ENCODE measurements at regions of chr15 and their contacts with region 1.

Region 1: GRCh38 chr15:93001881-93002280 is 87.1 kb downstream of the RGMA start:
- DNase-seq: no peak
- ATAC-seq: no peak
- H3K4me3 ChIP-seq: no peak overlapping the region
- H3K27ac ChIP-seq: no peak overlapping the region
- H3K4me1 ChIP-seq: no peaks in the 10 kb centered on the region
- H3K27me3 ChIP-seq: no peaks in the 10 kb centered on the region
- CTCF ChIP-seq: no peak

Region 2: DNA sequence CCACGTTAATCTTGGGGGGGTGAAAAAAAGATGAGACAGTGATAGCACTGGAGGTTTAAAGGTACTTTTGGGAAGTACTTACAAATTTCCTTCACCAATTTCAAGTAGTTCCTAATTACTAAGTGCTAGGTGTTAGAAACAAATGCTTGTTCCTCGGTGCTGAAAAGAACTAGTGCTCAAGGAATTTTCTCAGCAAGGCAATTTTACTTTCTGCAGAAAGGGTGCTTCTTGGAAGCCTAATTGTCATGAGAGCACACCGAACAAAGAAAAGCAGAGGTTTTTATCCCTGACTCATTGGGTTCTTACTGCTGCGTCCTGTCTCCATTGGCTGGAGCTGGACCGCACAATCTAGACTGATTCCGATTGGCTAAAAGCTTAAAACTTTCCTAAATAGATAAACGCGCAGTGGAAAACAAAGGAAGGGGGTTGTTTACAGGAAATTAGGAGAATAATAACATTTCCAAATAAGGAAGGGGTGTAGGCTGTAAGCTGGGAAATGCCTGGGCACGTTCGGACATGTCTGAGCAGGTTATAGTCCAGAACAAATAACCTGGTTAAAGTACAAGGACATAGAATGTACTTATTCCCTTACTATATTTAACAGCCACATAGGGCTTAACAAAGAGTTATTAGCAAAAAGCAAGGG is 52.2 kb before region 1 on chr15:
- intact Hi-C with region 1: loop called in 1 of 2 experiments (anchors 10 kb)
- DNase-seq: no peak
- ATAC-seq: no peak
- H3K4me3 ChIP-seq: no peak overlapping the region
- H3K27ac ChIP-seq: no peak overlapping the region
- H3K4me1 ChIP-seq: no peaks in the 10 kb centered on the region
- H3K27me3 ChIP-seq: no peaks in the 10 kb centered on the region
- CTCF ChIP-seq: no peak

Region 3: GRCh38 chr15:93087825-93088199 is 85.9 kb after region 1 on chr15:
- intact Hi-C with region 1: no loop called
- DNase-seq: peak in 3 of 4 donors; percentile 65 to 82 (median 67)
- ATAC-seq: peak; percentile 93
- H3K4me3 ChIP-seq: peak overlapping the region; percentile 28 to 49
- H3K27ac ChIP-seq: no peak overlapping the region
- H3K4me1 ChIP-seq: peaks cover 9 to 25% of the 10 kb centered on the region in 2 donors
- H3K27me3 ChIP-seq: peaks cover 24 to 95% of the 10 kb centered on the region in 2 donors
- CTCF ChIP-seq: peak; percentile 84 to 88

Region 4: DNA sequence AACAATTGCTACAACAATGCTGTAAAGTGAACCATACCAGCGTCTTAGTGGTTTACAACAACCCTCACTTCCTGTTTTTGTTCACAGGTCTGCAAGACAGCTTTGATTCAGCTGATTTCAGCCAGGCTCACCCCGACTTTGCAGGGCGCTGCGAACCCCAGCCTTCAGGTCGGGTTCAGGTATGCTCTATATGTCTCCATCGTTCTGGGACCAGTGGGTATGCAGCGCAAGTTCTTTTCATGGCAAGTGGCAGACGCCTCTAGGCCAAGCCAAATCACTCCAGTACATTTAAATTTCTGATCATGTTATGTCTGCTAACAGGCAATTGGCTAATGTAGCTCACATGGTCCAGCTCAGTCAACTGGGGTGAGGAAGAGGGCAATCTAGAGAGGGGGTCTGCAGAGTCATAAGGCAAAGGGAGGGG is 139.5 kb after region 1 on chr15:
- intact Hi-C with region 1: no loop called
- DNase-seq: no peak
- ATAC-seq: no peak
- H3K4me3 ChIP-seq: no peak overlapping the region
- H3K27ac ChIP-seq: no peak overlapping the region
- H3K4me1 ChIP-seq: no peaks in the 10 kb centered on the region
- H3K27me3 ChIP-seq: no peaks in the 10 kb centered on the region
- CTCF ChIP-seq: no peak